HEK293T (cell line): ENCODE measurements at regions of chr19 and their contacts with region 1.

Region 1: GRCh38 chr19:14786421-14786851 is 8.1 kb upstream of the ADGRE2 start:
- DNase-seq: peak; percentile 73

Region 2: GRCh38 chr19:14775869-14776586 is 10.4 kb before region 1 on chr19:
- CTCF ChIA-PET with region 1: interaction called, 17 read pairs
- POLR2A ChIA-PET with region 1: no interaction called
- DNase-seq: no peak

Region 3: GRCh38 chr19:14843578-14843977 is 57.1 kb after region 1 on chr19:
- CTCF ChIA-PET with region 1: no interaction called
- POLR2A ChIA-PET with region 1: no interaction called
- DNase-seq: no peak